ENCODE measurements at regions of chr16 and their contacts with region 1.

Region 1: DNA sequence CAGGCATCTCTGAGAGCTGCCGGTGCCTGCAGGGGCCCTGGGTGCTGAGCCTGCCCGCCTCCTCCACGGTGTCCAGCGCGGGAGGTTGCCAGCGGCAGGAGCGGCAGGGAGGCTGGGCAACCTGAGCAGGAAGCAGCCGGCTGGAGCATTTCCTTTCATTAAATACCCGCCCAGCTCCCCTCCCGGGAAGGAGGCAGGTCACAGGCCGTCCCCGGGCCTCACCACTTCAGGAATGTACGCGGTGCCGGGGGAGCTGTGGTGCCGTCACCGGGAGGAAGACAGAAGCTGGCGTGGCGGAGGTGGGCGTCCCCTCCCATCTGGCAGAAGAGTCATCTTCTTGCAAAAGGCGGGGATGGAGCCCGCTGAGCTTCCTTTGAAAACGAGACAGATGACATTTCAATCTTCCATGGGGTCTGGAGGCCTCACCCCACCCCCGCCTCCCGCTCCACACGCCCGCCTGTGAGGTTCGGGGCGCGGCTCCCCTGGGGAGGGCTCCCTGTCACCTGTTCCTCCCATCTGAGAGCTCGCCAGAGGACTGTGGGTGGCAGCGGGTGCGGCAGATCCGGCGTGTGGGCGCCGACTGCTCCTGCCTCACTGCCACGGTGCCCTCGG is 16.0 kb downstream of the SOX8 start:
- DNase-seq: peak; percentile 35 to 75 (median 62)
- ATAC-seq: peak; percentile 85
- H3K4me3 ChIP-seq: peak overlapping the region; percentile 75
- H3K4me3 Mint-ChIP-seq: peak overlapping the region; percentile 67 to 91 (median 83)
- H3K27ac ChIP-seq: peak overlapping the region; percentile 86
- H3K27ac Mint-ChIP-seq: peak overlapping the region in 8 of 9 donors; percentile 72 to 98 (median 92)
- H3K4me1 ChIP-seq: peaks cover 21 to 34% of the 10 kb centered on the region in 2 donors
- H3K4me1 Mint-ChIP-seq: peaks cover 17 to 55% (median 47%) of the 10 kb centered on the region in 7 donors
- H3K27me3 ChIP-seq: no peaks in the 10 kb centered on the region
- H3K27me3 Mint-ChIP-seq: peaks cover 0 to 49% (median 0%) of the 10 kb centered on the region in 5 donors

Region 2: DNA sequence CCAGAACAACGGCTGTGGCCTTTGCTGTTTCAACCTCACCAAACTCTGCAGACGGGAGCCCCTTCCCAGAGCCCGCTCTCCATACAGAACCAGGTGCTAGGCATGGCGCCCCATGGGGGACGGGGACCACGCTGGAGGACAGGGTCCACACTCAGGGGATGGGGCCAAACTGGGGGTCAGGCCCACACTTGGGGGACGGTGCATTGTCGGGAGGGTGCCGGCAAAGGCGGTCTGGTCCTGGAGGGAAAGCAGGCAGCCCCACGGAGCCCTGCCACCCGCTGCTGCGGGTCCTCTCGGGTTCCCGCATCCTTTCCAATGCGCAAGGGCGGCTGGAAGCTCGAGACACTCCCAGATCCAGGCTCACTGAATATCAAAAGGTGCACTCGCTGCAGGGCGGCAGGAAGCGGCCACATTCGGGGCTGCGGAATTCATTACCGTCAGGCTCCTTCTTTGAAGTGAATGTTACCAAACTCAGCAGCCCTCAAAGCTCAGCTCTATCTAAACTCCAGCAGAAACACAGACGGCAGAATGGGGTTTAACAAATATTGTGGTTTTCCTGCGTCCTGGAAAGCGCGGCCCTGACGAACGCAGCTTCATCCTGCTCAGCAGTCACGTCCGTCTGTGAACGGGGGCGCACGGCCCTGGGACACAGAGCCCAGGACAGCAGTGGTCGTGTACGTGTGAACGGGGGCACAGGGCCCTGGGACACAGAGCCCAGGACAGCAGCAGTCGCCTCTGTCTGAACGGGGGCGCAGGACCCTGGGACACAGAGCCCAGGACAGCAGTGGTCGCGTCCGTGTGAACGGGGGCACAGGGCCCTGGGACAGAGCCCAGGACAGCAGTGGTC is 68.1 kb before region 1 on chr16:
- CTCF ChIA-PET with region 1: no interaction called
- POLR2A ChIA-PET with region 1: no interaction called
- intact Hi-C with region 1: no loop called
- DNase-seq: no peak
- ATAC-seq: no peak
- H3K4me3 ChIP-seq: no peak overlapping the region
- H3K4me3 Mint-ChIP-seq: no peak overlapping the region
- H3K27ac ChIP-seq: no peak overlapping the region
- H3K27ac Mint-ChIP-seq: peak overlapping the region in 1 of 9 donors; percentile 41
- H3K4me1 ChIP-seq: no peaks in the 10 kb centered on the region
- H3K4me1 Mint-ChIP-seq: no peaks in the 10 kb centered on the region
- H3K27me3 ChIP-seq: no peaks in the 10 kb centered on the region
- H3K27me3 Mint-ChIP-seq: no peaks in the 10 kb centered on the region

Region 3: DNA sequence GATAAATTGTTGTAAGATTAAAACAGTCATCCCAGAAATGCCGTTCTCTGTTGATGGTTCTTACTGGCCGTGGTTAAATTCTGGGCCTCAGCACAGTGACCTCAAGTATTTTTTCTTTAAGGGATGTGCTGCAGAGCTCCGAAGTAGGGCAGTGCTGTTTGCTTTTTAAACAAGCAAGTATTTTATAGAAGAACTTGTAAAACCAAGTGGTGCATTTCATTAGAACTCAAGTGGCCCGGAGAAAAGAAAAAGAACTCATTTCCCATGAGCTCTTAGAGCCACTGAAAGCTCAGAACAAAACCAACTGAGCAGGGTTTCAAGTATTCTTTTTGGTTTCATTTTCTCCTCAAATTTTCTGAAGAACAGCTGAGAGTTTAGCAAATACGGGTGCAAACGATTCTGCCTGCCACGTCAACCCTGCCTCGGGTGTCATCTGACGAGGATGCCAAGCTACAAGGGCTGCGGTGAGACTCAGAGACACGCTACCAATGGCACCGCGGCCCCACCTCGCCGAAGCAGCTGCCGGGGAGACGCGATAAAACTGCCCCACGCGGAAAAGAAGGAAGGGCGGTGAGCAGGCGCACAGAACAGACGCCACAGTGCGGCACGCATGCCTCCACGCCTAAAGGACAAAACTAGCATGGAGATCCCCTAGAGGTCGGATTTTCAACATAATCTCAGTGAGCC is 33.0 kb before region 1 on chr16:
- CTCF ChIA-PET with region 1: interaction called, 3 read pairs
- POLR2A ChIA-PET with region 1: interaction called, 10 read pairs
- intact Hi-C with region 1: loop called in 1 of 2 experiments (anchors 5 kb)
- DNase-seq: peak in 6 of 9 donors; percentile 59 to 82 (median 72)
- ATAC-seq: peak; percentile 96
- H3K4me3 ChIP-seq: no peak overlapping the region
- H3K4me3 Mint-ChIP-seq: peak overlapping the region; percentile 30 to 83 (median 74)
- H3K27ac ChIP-seq: peak overlapping the region; percentile 69
- H3K27ac Mint-ChIP-seq: peak overlapping the region; percentile 43 to 96 (median 87)
- H3K4me1 ChIP-seq: peaks cover under 1 to 10% of the 10 kb centered on the region in 2 donors
- H3K4me1 Mint-ChIP-seq: peaks cover 28 to 57% (median 48%) of the 10 kb centered on the region in 7 donors
- H3K27me3 ChIP-seq: no peaks in the 10 kb centered on the region
- H3K27me3 Mint-ChIP-seq: no peaks in the 10 kb centered on the region

Region 4: GRCh38 chr16:982145-983043 is 15.2 kb before region 1 on chr16:
- CTCF ChIA-PET with region 1: interaction called, 5 read pairs
- POLR2A ChIA-PET with region 1: interaction called, 87 read pairs
- intact Hi-C with region 1: loop called in 1 of 2 experiments (anchors 1 kb)
- DNase-seq: peak in 1 of 9 donors; percentile 37
- ATAC-seq: peak; percentile 16
- H3K4me3 ChIP-seq: no peak overlapping the region
- H3K4me3 Mint-ChIP-seq: peak overlapping the region; percentile 23 to 83 (median 66)
- H3K27ac ChIP-seq: no peak overlapping the region
- H3K27ac Mint-ChIP-seq: peak overlapping the region in 3 of 9 donors; percentile 10 to 25 (median 13)
- H3K4me1 ChIP-seq: peaks cover 0 to 5% of the 10 kb centered on the region in 2 donors
- H3K4me1 Mint-ChIP-seq: peaks cover 0 to 20% (median 13%) of the 10 kb centered on the region in 7 donors
- H3K27me3 ChIP-seq: no peaks in the 10 kb centered on the region
- H3K27me3 Mint-ChIP-seq: peaks cover 0 to 29% (median 0%) of the 10 kb centered on the region in 5 donors

Region 5: GRCh38 chr16:1009358-1010150 is 12.0 kb after region 1 on chr16:
- CTCF ChIA-PET with region 1: no interaction called
- POLR2A ChIA-PET with region 1: interaction called, 12 read pairs
- intact Hi-C with region 1: loop called in 1 of 2 experiments (anchors 1 kb)
- DNase-seq: peak in 1 of 9 donors; percentile 19
- ATAC-seq: no peak
- H3K4me3 ChIP-seq: no peak overlapping the region
- H3K4me3 Mint-ChIP-seq: peak overlapping the region in 2 of 10 donors; percentile 48 to 66
- H3K27ac ChIP-seq: no peak overlapping the region
- H3K27ac Mint-ChIP-seq: no peak overlapping the region
- H3K4me1 ChIP-seq: peaks cover 5 to 15% of the 10 kb centered on the region in 2 donors
- H3K4me1 Mint-ChIP-seq: peaks cover 0 to 27% (median 15%) of the 10 kb centered on the region in 7 donors
- H3K27me3 ChIP-seq: no peaks in the 10 kb centered on the region
- H3K27me3 Mint-ChIP-seq: peaks cover 0 to 13% (median 0%) of the 10 kb centered on the region in 5 donors

Region 6: DNA sequence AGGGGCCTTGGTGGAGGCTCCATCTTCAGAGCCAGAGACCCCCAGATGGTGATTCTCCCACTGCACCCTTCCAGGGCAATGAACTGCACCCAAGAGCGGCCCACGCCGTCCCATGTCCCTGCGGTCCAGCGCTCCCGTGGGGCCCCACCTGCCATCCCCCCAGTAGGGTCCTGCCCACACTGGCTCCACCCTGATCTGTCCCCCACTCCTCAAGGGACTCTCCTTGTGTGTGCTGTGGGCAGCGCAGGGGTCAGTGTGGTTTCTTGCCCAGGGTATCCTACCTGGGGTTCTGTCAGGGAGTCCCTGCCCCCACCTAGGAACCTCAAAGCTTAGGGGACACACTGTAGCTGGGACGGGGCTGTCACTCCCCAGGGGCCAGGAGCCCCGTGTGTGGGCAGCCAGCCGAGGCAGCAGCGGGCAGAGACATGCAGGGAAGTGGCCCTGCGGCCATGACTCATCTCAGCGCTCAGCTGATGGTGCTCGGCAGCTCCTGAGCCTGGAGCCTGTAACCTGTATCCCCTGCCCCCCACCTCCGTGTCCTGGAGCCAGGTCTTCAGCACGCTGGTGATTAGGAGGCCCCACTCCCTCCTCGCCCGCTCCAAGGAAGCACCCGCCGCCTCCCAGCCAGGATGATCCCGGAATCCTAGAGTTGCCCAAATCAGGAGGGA is 39.3 kb after region 1 on chr16:
- CTCF ChIA-PET with region 1: no interaction called
- POLR2A ChIA-PET with region 1: no interaction called
- intact Hi-C with region 1: no loop called
- DNase-seq: no peak
- ATAC-seq: no peak
- H3K4me3 ChIP-seq: no peak overlapping the region
- H3K4me3 Mint-ChIP-seq: no peak overlapping the region
- H3K27ac ChIP-seq: no peak overlapping the region
- H3K27ac Mint-ChIP-seq: no peak overlapping the region
- H3K4me1 ChIP-seq: no peaks in the 10 kb centered on the region
- H3K4me1 Mint-ChIP-seq: no peaks in the 10 kb centered on the region
- H3K27me3 ChIP-seq: no peaks in the 10 kb centered on the region
- H3K27me3 Mint-ChIP-seq: no peaks in the 10 kb centered on the region

Region 7: DNA sequence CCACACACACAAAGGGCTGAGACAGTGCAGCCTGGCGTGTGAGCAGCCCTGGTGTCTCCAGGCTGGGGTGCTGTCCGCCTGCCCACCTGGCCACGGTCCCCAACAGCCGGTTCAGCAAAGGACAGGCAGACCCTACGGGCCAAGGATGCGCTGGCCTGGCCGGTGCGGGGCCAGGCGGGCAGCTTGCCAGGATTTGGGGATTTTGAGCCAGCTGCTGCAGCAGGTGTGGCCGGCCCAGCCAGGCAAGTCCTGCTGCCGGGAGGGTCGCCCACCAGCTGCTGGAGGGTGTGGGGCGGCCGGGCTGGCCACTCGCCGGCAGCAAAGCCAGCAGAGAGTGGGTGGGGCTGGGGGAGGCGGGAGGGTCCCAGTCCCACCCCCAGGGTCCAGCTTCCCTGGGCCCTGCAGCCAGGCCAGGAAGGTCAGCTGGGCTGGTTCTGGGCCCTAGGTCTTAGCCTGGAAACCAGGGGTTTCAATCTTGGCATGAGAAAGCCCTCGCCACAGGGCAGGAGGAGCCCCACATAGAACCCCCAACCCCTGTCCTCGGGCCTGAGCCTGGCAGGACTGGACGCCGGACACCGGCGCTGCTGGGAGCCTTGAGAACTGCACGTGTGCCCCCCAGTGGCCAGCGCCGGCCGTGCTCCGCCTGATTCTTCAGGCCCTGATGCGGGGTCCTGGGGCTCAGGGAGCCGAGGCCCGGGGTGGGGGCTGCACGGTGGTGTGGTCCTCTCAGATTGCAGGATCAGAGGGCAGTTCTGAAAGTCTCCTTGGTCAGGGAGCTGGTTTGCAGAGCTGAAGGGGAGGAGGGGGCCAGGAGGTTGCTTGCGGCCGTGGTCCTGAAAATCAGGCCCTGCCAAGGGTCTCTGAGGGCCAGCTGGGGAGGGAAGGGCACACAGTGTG is 57.4 kb after region 1 on chr16:
- CTCF ChIA-PET with region 1: interaction called, 13 read pairs
- POLR2A ChIA-PET with region 1: interaction called, 11 read pairs
- intact Hi-C with region 1: loop called in 1 of 2 experiments (anchors 1 kb)
- DNase-seq: peak in 4 of 9 donors; percentile 23 to 41 (median 26)
- ATAC-seq: no peak
- H3K4me3 ChIP-seq: no peak overlapping the region
- H3K4me3 Mint-ChIP-seq: no peak overlapping the region
- H3K27ac ChIP-seq: no peak overlapping the region
- H3K27ac Mint-ChIP-seq: peak overlapping the region in 1 of 9 donors; percentile 46
- H3K4me1 ChIP-seq: no peaks in the 10 kb centered on the region
- H3K4me1 Mint-ChIP-seq: peaks cover 0 to 2% (median 0%) of the 10 kb centered on the region in 7 donors
- H3K27me3 ChIP-seq: no peaks in the 10 kb centered on the region
- H3K27me3 Mint-ChIP-seq: no peaks in the 10 kb centered on the region

Region 8: GRCh38 chr16:1102921-1103635 is 105.5 kb after region 1 on chr16:
- CTCF ChIA-PET with region 1: no interaction called
- POLR2A ChIA-PET with region 1: no interaction called
- intact Hi-C with region 1: loop called in 1 of 2 experiments (anchors 1 kb)
- DNase-seq: peak; percentile 32 to 83 (median 62)
- ATAC-seq: peak; percentile 82
- H3K4me3 ChIP-seq: no peak overlapping the region
- H3K4me3 Mint-ChIP-seq: no peak overlapping the region
- H3K27ac ChIP-seq: no peak overlapping the region
- H3K27ac Mint-ChIP-seq: no peak overlapping the region
- H3K4me1 ChIP-seq: no peaks in the 10 kb centered on the region
- H3K4me1 Mint-ChIP-seq: no peaks in the 10 kb centered on the region
- H3K27me3 ChIP-seq: no peaks in the 10 kb centered on the region
- H3K27me3 Mint-ChIP-seq: peaks cover 0 to 11% (median 4%) of the 10 kb centered on the region in 5 donors

Measured in naive thymus-derived CD4-positive, alpha-beta T cell (primary cell).